ENCODE measurements at regions of chr12 and their contacts with region 1.

Region 1: DNA sequence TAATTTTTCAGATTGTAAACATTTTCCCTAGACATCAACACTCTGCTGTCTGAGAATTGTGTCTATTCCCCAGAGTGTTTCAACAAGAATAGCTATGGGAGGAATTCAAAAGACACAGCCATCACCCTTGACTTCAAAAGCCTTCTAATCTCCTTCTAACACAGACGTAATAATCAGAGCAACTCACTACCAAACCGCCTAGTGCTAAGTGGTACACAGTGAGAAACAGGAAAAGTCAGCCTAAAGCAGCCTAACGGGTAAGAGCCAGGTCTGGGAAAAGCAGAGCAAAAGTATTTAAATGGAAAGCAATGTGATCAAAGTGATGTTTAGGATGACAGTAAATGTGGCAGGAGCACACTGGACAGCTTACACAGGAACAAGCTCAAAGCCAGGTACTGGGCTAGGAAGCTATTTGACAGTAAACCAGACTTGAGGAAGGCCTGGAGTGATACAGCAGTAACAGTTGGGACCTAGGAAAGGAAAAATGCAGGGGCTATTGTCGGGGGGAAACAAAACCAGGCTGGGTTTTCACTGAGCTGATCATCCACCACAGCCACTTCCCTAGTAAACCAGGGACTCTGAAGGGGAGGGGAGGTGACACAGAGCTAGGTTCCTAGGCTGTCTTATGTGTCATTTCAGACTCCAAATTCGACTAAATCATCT is 29.4 kb downstream of the CORO1C start:
- DNase-seq: peak; percentile 19
- H3K4me3 Mint-ChIP-seq: peak overlapping the region; percentile 70
- H3K27ac Mint-ChIP-seq: peak overlapping the region; percentile 89
- H3K4me1 Mint-ChIP-seq: peaks cover 31% of the 10 kb centered on the region
- H3K27me3 Mint-ChIP-seq: no peaks in the 10 kb centered on the region
- CTCF ChIP-seq: no peak

Region 2: DNA sequence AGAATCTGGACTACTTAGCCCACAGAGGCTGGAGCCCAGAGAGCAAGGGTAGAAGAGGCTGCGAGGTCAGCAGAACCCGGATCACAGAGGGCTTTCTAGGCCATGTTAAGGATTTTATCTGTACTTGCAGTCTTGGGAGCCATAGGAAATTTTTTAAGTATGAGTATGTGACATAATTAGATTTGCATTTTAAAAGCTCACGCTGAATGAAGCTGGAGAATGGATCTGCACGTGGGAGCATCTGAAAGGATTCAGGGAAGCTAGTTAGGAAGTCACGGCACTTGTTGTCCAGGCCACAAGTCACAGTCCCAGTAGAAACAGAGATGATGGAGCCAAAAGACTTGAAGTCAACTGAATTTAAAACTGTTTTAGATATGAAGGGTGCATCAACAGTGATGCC is 15.3 kb after region 1 on chr12:
- CTCF ChIA-PET with region 1: interaction called, 7 read pairs
- POLR2A ChIA-PET with region 1: interaction called, 151 read pairs
- intact Hi-C with region 1: no loop called
- DNase-seq: no peak
- H3K4me3 Mint-ChIP-seq: no peak overlapping the region
- H3K27ac Mint-ChIP-seq: no peak overlapping the region
- H3K4me1 Mint-ChIP-seq: peaks cover 17% of the 10 kb centered on the region
- H3K27me3 Mint-ChIP-seq: no peaks in the 10 kb centered on the region
- CTCF ChIP-seq: no peak

Region 3: GRCh38 chr12:108722992-108723766 is 21.3 kb after region 1 on chr12:
- CTCF ChIA-PET with region 1: interaction called, 7 read pairs
- POLR2A ChIA-PET with region 1: interaction called, 151 read pairs
- intact Hi-C with region 1: no loop called
- DNase-seq: peak; percentile 56
- H3K4me3 Mint-ChIP-seq: peak overlapping the region; percentile 10
- H3K27ac Mint-ChIP-seq: peak overlapping the region; percentile 79
- H3K4me1 Mint-ChIP-seq: peaks cover 58% of the 10 kb centered on the region
- H3K27me3 Mint-ChIP-seq: no peaks in the 10 kb centered on the region
- CTCF ChIP-seq: no peak

Region 4: DNA sequence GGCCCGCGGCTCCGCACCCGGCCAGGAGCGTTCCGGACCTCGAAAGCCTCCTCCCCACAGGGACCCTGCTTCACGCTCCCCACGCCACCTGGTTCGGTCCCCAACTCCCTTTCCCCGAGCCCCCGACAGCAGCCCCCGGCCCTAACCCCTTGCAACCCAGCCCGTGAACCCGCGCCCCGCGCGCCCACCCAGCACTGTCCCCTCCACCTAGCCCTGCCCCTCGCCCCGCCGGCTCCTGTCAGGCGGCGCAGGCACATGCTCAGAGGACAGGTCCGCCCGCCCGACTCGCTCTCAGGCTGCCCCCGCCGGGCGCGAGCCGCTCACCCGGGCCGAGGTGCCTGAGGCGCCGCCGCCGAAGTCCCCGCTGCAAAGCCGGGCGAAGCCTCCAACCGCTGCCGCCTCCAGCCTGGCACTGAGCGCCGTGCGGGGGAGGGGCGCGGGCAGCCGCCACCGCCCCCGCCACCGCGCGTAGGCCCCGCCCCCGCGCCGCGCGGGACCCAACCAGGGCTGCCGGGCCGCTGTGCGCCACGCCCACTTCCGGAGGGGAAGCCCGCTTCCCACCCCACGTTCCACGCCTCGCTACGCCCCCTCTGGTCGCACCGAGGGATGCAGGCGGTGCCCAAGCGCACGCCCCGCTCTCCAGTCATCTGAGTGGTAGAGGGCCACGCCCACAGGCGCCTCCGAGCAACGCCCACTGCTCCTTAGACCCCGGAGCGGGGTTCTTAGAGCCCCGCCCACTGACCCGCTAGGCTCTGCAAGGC is 29.4 kb after region 1 on chr12 and contains the start of gene CORO1C:
- CTCF ChIA-PET with region 1: interaction called, 6 read pairs
- POLR2A ChIA-PET with region 1: interaction called, 179 read pairs
- intact Hi-C with region 1: no loop called
- DNase-seq: peak; percentile 96
- H3K4me3 Mint-ChIP-seq: peak within 1 kb of the TSS; percentile 90
- H3K27ac Mint-ChIP-seq: peak within 1 kb of the TSS; percentile 87
- H3K4me1 Mint-ChIP-seq: peaks cover 42% of the 10 kb centered on the region
- H3K27me3 Mint-ChIP-seq: no peaks in the 10 kb centered on the region
- CTCF ChIP-seq: peak; percentile 68
- total RNA-seq, gene CORO1C: 130 and 141 TPM in 2 replicates

Region 5: DNA sequence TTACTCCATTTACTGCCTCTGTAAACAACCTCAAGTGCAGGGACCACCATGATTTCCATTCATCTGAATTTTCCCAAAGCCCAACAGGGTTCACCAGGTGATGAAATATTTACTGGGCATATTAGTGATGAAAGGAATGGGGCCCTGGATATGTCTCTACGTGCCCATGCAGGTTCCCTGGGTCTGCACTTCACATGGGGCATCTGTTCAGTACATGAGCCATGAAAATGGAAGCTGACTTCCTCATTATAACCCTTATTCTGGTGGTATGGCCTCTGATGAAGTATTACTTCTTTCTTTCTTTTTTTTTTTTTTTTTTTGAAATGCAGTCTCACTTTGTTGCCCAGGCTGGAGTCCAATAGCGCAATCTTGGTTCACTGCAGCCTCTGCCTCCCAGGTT is 55.9 kb after region 1 on chr12:
- CTCF ChIA-PET with region 1: no interaction called
- POLR2A ChIA-PET with region 1: no interaction called
- intact Hi-C with region 1: no loop called
- DNase-seq: peak; percentile 13
- H3K4me3 Mint-ChIP-seq: no peak overlapping the region
- H3K27ac Mint-ChIP-seq: no peak overlapping the region
- H3K4me1 Mint-ChIP-seq: no peaks in the 10 kb centered on the region
- H3K27me3 Mint-ChIP-seq: no peaks in the 10 kb centered on the region
- CTCF ChIP-seq: no peak

Region 6: DNA sequence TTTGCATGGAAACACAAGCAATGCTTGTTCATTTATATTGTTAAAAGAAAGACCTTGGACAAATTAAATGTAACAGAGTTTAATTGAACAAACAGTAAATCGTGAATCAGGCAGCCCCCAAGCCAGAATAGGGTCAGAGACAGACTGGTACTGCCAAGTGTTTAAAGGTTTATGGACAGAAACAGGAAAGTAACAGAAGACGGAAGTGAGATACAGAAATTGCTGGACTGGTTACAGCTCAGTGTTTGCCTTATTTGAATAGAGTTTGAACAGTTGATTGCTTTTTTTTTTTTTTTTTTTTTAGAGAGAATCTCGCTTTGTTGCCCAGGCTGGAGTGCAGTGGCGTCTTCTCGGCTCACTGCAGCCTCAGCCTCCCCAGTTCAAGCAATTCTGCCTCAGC is 228.2 kb after region 1 on chr12:
- CTCF ChIA-PET with region 1: no interaction called
- POLR2A ChIA-PET with region 1: no interaction called
- intact Hi-C with region 1: no loop called
- DNase-seq: no peak
- H3K4me3 Mint-ChIP-seq: no peak overlapping the region
- H3K27ac Mint-ChIP-seq: no peak overlapping the region
- H3K4me1 Mint-ChIP-seq: no peaks in the 10 kb centered on the region
- H3K27me3 Mint-ChIP-seq: peaks cover 18% of the 10 kb centered on the region
- CTCF ChIP-seq: no peak

Measured in MCF 10A (cell line).